Activated B cell treated with CpG ODN at 0.5 μM for 24 hours (primary cell): ENCODE measurements at regions of chr7 and their contacts with region 1.

Region 1: GRCh38 chr7:47945261-47946001 is 2.8 kb downstream of the PKD1L1 start:
- DNase-seq: peak; percentile 61
- ATAC-seq: peak; percentile 52
- H3K4me3 Mint-ChIP-seq: no peak overlapping the region
- H3K27ac Mint-ChIP-seq: no peak overlapping the region
- H3K4me1 Mint-ChIP-seq: no peaks in the 10 kb centered on the region
- H3K27me3 Mint-ChIP-seq: peaks cover 3% of the 10 kb centered on the region
- CTCF ChIP-seq: peak; percentile 90

Region 2: DNA sequence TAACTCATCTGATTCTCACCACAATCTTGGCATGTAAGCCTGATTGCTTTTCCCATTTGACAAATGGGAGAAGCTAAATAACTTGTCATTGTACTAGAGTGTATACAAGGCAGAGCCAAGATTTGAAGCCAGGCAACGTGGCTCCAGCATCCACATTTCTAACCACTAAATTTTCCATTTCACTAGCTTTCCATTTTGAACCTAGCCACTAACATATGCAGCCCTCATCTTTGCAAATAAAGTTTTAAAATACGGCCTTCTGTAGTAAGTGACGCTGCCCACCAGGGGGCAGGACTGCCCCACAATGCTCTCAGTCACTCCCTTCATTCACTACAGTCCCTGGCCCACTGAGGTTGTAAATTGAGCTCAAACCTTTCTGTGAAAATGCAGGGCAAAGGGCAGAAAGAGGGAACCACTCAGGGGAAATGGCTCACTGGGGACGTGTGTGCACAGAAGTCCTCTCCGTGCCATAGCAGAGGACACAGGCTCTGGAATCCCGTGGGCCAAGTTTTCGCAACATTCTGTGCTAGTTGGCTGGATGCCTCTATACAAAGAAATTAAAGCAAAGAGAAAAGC is 679.2 kb before region 1 on chr7:
- CTCF ChIA-PET with region 1: interaction called, 18 read pairs
- POLR2A ChIA-PET with region 1: no interaction called
- intact Hi-C with region 1: no loop called
- DNase-seq: peak; percentile 50
- ATAC-seq: peak; percentile 92
- H3K4me3 Mint-ChIP-seq: no peak overlapping the region
- H3K27ac Mint-ChIP-seq: no peak overlapping the region
- H3K4me1 Mint-ChIP-seq: no peaks in the 10 kb centered on the region
- H3K27me3 Mint-ChIP-seq: no peaks in the 10 kb centered on the region
- CTCF ChIP-seq: peak; percentile 60

Region 3: DNA sequence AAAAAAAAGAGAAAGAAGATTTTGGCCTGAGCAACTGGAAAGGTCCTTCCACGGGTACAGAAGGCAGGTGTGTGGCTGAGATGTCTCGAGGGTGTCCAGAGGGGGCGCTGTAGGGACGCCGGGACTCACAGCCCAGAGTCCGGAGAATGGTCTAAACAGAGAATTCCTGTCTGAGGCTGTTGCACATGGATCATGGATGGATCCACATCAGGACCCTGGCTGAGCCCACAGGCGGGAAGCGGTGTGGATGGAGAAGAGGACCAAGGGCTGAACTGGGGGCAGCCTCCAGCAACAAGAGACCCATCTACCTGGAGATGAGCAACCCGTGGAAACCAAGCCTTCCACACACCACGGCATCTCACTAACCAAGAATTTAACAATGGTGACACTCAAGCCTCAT is 52.2 kb before region 1 on chr7:
- CTCF ChIA-PET with region 1: no interaction called
- POLR2A ChIA-PET with region 1: no interaction called
- intact Hi-C with region 1: no loop called
- DNase-seq: no peak
- ATAC-seq: no peak
- H3K4me3 Mint-ChIP-seq: no peak overlapping the region
- H3K27ac Mint-ChIP-seq: no peak overlapping the region
- H3K4me1 Mint-ChIP-seq: no peaks in the 10 kb centered on the region
- H3K27me3 Mint-ChIP-seq: peaks cover 2% of the 10 kb centered on the region
- CTCF ChIP-seq: no peak

Region 4: DNA sequence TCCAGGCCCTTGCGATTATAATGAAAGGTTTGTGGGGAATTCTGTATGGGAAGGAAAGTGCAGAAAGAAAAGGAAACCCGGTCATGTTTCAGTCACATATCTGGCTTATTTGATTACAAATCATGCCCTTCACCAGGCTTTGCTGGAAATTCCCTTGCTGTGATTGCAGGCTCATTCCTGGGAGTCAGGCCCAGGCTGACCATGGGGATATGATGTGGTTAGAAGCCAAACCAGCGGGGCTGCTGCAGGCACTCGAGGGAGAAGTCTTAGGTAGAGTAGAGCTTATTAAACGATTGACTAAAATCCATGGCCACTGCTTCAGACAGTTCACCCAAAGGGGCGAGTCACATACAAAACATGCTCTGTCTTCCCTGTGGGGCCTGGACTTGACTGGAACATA is 13.4 kb before region 1 on chr7:
- CTCF ChIA-PET with region 1: interaction called, 12 read pairs
- POLR2A ChIA-PET with region 1: interaction called, 3 read pairs
- intact Hi-C with region 1: no loop called
- DNase-seq: no peak
- ATAC-seq: no peak
- H3K4me3 Mint-ChIP-seq: no peak overlapping the region
- H3K27ac Mint-ChIP-seq: no peak overlapping the region
- H3K4me1 Mint-ChIP-seq: peaks cover 35% of the 10 kb centered on the region
- H3K27me3 Mint-ChIP-seq: peaks cover 2% of the 10 kb centered on the region
- CTCF ChIP-seq: no peak

Region 5: DNA sequence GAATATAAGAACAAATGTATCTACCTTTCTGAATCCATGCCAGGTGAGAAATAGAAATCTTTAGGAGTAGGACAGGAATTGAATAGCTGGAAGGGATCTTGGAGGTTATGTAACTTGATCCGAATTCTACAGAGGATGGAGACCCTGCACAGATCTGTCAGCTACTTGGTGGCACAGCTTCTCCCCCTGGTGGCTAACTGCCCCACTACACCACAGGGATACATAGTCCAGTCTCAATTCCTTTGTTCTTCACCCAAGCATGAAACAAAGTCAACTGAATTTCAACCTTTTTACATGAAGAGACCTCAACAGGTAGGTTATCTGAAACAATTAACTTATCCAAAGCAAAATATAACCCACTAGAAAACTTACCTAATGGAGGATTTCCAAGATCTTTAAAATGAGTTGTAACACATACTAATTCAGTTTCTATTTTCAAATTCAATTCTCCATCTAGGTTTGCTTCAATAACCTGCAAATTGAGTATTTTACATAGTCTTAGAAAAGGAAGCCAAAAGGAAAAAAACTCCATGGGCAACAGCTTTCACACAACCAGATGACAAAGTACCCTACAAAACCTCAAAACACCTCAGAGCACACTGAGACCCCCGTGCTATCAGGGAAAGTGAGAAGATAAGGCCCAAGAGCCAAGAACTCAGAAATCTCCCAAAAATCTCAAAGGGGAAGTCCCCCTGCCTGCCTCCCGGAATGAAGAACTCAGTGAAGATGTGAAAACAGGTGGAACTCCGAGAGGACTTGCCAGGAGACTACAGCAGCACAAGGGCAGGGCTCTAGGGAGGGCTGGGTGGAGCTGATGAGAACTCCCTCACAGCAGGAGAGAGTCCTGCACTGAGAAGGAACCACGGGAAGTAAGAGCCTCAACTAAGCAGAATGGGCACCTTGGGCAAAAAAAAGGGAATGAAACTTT is 23.7 kb after region 1 on chr7:
- CTCF ChIA-PET with region 1: interaction called, 29 read pairs
- POLR2A ChIA-PET with region 1: no interaction called
- intact Hi-C with region 1: loop called (anchors 1 kb)
- DNase-seq: peak; percentile 48
- ATAC-seq: peak; percentile 77
- H3K4me3 Mint-ChIP-seq: no peak overlapping the region
- H3K27ac Mint-ChIP-seq: no peak overlapping the region
- H3K4me1 Mint-ChIP-seq: peaks cover 23% of the 10 kb centered on the region
- H3K27me3 Mint-ChIP-seq: no peaks in the 10 kb centered on the region
- CTCF ChIP-seq: peak; percentile 86

Region 6: DNA sequence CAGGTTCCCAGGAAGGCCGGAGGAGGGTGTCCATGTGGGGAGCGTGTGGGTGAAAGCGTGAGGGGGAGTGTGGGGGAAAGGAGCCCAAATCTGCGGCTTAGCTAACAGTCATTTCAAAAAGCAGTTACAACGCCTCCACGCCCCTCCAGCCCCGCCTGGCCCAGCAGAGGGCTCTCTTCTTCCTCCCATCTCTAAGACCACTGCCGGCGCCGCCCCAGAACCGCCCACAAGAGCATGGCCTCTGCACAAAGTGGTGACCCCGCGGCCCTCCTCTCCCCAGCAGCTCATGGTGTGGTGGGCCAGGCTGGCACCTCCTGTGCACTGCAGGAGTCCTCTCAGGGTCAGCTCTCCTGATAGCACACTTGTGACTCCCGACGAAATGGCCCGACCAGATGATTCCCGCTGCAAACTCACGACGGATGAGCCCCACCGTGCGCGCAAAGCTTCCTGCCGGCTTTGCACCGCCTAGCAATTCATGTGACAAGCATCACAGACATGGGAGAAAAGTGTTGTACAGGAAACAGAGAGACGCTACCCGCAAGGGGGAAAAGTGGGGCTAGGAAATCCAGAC is 46.4 kb after region 1 on chr7:
- CTCF ChIA-PET with region 1: interaction called, 11 read pairs
- POLR2A ChIA-PET with region 1: no interaction called
- intact Hi-C with region 1: loop called (anchors 1 kb)
- DNase-seq: peak; percentile 78
- ATAC-seq: peak; percentile 98
- H3K4me3 Mint-ChIP-seq: peak overlapping the region; percentile 97
- H3K27ac Mint-ChIP-seq: peak overlapping the region; percentile 82
- H3K4me1 Mint-ChIP-seq: peaks cover 14% of the 10 kb centered on the region
- H3K27me3 Mint-ChIP-seq: no peaks in the 10 kb centered on the region
- CTCF ChIP-seq: peak; percentile 40

Region 7: GRCh38 chr7:49852619-49853462 is 1907.4 kb after region 1 on chr7:
- CTCF ChIA-PET with region 1: no interaction called
- POLR2A ChIA-PET with region 1: no interaction called
- intact Hi-C with region 1: loop called (anchors 10 kb)
- DNase-seq: no peak
- ATAC-seq: no peak
- H3K4me3 Mint-ChIP-seq: no peak overlapping the region
- H3K27ac Mint-ChIP-seq: no peak overlapping the region
- H3K4me1 Mint-ChIP-seq: no peaks in the 10 kb centered on the region
- H3K27me3 Mint-ChIP-seq: no peaks in the 10 kb centered on the region
- CTCF ChIP-seq: no peak